ENCODE measurements at regions of chr13 and their contacts with region 1.

Region 1: DNA sequence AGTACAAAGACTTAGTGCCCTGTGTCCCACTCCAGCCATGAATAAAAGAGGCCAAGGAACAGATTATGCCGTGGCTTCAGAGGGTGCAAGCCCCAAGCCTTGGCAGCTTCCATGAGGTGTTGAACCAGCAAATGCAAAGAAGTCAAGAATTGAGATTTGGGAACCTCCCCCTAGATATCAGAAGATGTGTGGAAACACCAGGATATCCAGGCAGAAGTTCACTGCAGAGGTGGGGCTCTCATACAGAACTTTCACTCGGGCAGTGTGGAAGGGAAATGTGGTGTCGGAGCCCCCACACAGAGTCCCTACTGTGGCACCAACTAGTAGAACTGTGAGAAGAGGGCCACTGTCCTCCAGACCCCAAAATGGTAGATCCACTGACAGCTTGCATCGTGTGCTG is 2421.4 kb downstream of the PCDH9 start:
- DNase-seq: no peak
- H3K4me3 ChIP-seq: no peak overlapping the region
- CTCF ChIP-seq: no peak
- POLR2A ChIP-seq: no peak

Region 2: GRCh38 chr13:65808061-65808460 is 999.4 kb after region 1 on chr13:
- intact Hi-C with region 1: loop called (anchors 5 kb)
- DNase-seq: no peak
- H3K4me3 ChIP-seq: no peak overlapping the region
- CTCF ChIP-seq: no peak
- POLR2A ChIP-seq: no peak